CD8-positive, alpha-beta T cell (primary cell): ENCODE measurements at regions of chr11 and their contacts with region 1.

Region 1: DNA sequence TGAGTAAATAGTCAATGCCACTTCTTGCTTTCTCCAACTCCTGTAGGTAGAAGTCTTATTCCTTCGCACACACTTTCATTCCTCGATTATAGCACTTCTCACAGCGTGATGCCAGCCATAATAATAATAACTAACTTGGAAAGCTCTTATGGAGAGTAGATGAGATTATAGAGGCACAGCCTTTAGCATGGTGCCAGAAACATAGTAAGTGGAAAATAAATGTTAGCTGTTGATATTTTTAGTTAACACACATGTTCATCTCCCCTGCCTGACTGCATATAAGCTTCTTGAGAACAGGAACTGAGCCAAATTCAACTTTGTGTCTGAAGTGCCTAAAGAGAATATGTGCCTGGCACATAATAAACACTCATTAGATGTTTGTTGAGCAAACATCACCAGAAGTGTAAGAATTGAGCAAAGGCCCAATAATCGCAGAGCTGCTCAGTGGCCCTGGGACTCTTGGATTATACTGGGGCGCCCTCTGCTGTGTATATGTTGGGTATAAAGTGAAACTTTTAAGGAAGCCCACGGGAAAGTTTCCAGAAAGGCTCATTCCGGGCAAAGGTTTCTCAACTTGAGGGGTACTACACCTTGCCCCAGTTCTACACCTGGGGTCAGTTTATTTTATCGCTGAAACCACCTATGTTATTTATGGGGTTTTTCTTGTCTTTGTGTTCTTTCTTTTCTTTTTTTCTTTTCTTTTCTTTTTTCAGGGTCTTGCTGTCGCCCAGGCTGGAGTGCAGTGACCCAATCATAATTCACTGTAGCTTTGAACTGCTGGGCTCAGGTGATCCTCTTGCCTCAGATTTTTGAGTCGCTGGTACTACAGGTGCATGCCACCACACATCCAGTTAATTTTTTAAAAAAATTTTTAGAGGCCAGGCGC is 22.3 kb downstream of the SLN start:
- DNase-seq: peak in 8 of 9 experiments; percentile 30 to 63 (median 52)
- ATAC-seq: peak; percentile 58
- H3K4me3 ChIP-seq: no peak overlapping the region
- H3K4me3 Mint-ChIP-seq: no peak overlapping the region
- H3K27ac ChIP-seq: no peak overlapping the region
- H3K27ac Mint-ChIP-seq: no peak overlapping the region
- H3K4me1 ChIP-seq: no peaks in the 10 kb centered on the region
- H3K4me1 Mint-ChIP-seq: no peaks in the 10 kb centered on the region
- H3K27me3 ChIP-seq: peaks cover 0 to 4% of the 10 kb centered on the region in 2 experiments
- H3K27me3 Mint-ChIP-seq: peaks cover 9% of the 10 kb centered on the region
- CTCF ChIP-seq: peak; percentile 47

Region 2: GRCh38 chr11:106087815-106088435 is 1601.6 kb before region 1 on chr11:
- CTCF ChIA-PET with region 1: no interaction called
- POLR2A ChIA-PET with region 1: no interaction called
- intact Hi-C with region 1: loop called in 1 of 2 experiments (anchors 5 kb)
- DNase-seq: peak in 7 of 9 experiments; percentile 2 to 61 (median 46)
- ATAC-seq: peak; percentile 63
- H3K4me3 ChIP-seq: no peak overlapping the region
- H3K4me3 Mint-ChIP-seq: no peak overlapping the region
- H3K27ac ChIP-seq: no peak overlapping the region
- H3K27ac Mint-ChIP-seq: no peak overlapping the region
- H3K4me1 ChIP-seq: peaks cover 12% of the 10 kb centered on the region
- H3K4me1 Mint-ChIP-seq: peaks cover 66% of the 10 kb centered on the region
- H3K27me3 ChIP-seq: no peaks in the 10 kb centered on the region
- H3K27me3 Mint-ChIP-seq: no peaks in the 10 kb centered on the region
- CTCF ChIP-seq: peak; percentile 91

Region 3: GRCh38 chr11:107573438-107573837 is 116.1 kb before region 1 on chr11:
- CTCF ChIA-PET with region 1: interaction called, 15 read pairs
- POLR2A ChIA-PET with region 1: no interaction called
- intact Hi-C with region 1: loop called (anchors 1 kb)
- DNase-seq: no peak
- ATAC-seq: no peak
- H3K4me3 ChIP-seq: no peak overlapping the region
- H3K4me3 Mint-ChIP-seq: no peak overlapping the region
- H3K27ac ChIP-seq: no peak overlapping the region
- H3K27ac Mint-ChIP-seq: no peak overlapping the region
- H3K4me1 ChIP-seq: no peaks in the 10 kb centered on the region
- H3K4me1 Mint-ChIP-seq: no peaks in the 10 kb centered on the region
- H3K27me3 ChIP-seq: no peaks in the 10 kb centered on the region
- H3K27me3 Mint-ChIP-seq: peaks cover 4% of the 10 kb centered on the region
- CTCF ChIP-seq: no peak

Region 4: GRCh38 chr11:107722662-107723061 is 33.1 kb after region 1 on chr11:
- CTCF ChIA-PET with region 1: no interaction called
- POLR2A ChIA-PET with region 1: no interaction called
- intact Hi-C with region 1: no loop called
- DNase-seq: no peak
- ATAC-seq: no peak
- H3K4me3 ChIP-seq: no peak overlapping the region
- H3K4me3 Mint-ChIP-seq: no peak overlapping the region
- H3K27ac ChIP-seq: no peak overlapping the region
- H3K27ac Mint-ChIP-seq: no peak overlapping the region
- H3K4me1 ChIP-seq: no peaks in the 10 kb centered on the region
- H3K4me1 Mint-ChIP-seq: no peaks in the 10 kb centered on the region
- H3K27me3 ChIP-seq: no peaks in the 10 kb centered on the region
- H3K27me3 Mint-ChIP-seq: peaks cover 11% of the 10 kb centered on the region
- CTCF ChIP-seq: no peak

Region 5: DNA sequence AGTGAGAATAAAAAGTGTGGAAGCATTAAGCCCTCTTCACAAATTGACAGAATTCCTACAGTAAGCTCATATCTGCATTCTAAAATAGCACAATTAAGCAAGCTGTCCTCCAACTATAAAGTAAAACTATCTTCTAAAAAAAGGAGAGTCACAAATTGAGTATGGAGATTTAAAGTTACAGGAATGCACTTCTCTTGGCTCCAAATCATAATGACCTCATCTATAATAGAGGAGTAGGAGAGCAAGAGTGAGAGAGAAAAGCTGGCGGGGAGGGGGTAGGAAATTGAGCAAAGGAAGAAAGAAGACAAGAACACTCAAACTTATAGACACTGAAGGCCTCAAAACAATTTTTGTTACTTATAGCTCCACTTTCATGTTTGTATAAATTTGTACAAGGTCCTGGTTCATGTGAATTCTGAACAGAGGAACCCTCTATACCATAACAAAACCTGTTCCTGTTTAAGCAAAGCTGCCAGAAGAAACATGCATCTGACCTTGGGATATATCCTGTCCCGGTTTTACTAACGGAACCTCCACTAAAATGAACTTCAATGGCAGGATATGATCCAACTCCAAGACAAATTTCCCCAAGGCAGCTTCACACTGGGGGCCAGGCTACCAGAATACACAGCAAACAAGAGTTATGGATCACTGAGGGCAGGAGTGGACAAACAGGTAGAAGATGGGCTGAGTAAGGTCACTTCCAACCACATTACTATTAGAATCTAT is 131.8 kb after region 1 on chr11:
- CTCF ChIA-PET with region 1: no interaction called
- POLR2A ChIA-PET with region 1: no interaction called
- intact Hi-C with region 1: no loop called
- DNase-seq: no peak
- ATAC-seq: no peak
- H3K4me3 ChIP-seq: no peak overlapping the region
- H3K4me3 Mint-ChIP-seq: no peak overlapping the region
- H3K27ac ChIP-seq: no peak overlapping the region
- H3K27ac Mint-ChIP-seq: no peak overlapping the region
- H3K4me1 ChIP-seq: no peaks in the 10 kb centered on the region
- H3K4me1 Mint-ChIP-seq: peaks cover 3% of the 10 kb centered on the region
- H3K27me3 ChIP-seq: no peaks in the 10 kb centered on the region
- H3K27me3 Mint-ChIP-seq: no peaks in the 10 kb centered on the region
- CTCF ChIP-seq: no peak

Region 6: GRCh38 chr11:108364159-108364558 is 674.6 kb after region 1 on chr11:
- CTCF ChIA-PET with region 1: no interaction called
- POLR2A ChIA-PET with region 1: no interaction called
- intact Hi-C with region 1: no loop called
- DNase-seq: no peak
- ATAC-seq: no peak
- H3K4me3 ChIP-seq: no peak overlapping the region
- H3K4me3 Mint-ChIP-seq: no peak overlapping the region
- H3K27ac ChIP-seq: no peak overlapping the region
- H3K27ac Mint-ChIP-seq: no peak overlapping the region
- H3K4me1 ChIP-seq: no peaks in the 10 kb centered on the region
- H3K4me1 Mint-ChIP-seq: no peaks in the 10 kb centered on the region
- H3K27me3 ChIP-seq: no peaks in the 10 kb centered on the region
- H3K27me3 Mint-ChIP-seq: no peaks in the 10 kb centered on the region
- CTCF ChIP-seq: no peak